Posterior vena cava (tissue), 2 donors: ENCODE measurements at regions of chr11 and their contacts with region 1.

Region 1: GRCh38 chr11:123020968-123021367 is 39.3 kb upstream of the BSX start:
- DNase-seq: no peak

Region 2: DNA sequence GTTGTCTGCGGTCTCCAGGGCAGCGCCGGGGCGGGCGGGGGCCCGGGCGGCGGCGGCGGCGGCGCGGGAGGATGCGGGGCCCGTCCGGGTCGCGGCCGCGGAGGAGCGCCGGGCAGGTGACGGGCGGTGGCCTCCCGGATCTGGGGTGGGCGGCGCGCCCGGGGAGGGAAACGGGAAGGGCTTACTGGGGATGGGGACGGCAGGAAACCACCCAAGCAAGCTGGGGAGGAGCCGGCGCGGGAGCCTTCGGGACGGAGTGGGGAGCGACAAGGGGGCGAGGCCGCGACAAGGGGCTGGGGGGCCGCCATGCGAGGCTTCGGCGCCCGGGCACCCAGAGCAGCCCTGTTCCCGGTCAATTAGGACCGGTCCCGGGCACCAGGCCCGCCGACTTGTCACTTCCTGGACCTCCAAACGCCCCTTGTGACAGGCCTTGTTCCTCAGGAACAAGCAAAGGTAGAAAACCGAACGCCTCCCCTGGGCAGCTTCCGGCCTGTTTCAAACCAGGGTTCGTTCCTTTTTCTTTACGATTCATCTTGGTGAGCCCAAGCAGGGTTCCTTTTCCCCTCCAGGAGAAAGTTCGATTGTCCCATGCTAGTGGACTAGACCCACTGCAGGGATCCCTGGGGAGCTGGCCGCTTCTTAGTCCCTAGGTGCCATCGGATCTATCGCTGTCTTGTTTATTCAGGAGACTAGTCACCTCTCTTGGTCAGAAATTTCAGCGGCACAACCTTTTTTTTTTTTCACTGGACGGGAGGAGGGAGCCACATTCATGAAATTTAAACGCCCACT is 137.9 kb before region 1 on chr11:
- intact Hi-C with region 1: loop called in 1 of 2 experiments (anchors 10 kb)
- DNase-seq: peak; percentile 83